Activated naive CD8-positive, alpha-beta T cell treated with anti-CD3 and anti-CD28 coated beads, Interleukin-2, amount 10 ng/mL, durations not matched to agents 7 days and 5 days (primary cell): ENCODE measurements at regions of chr2 and their contacts with region 1.

Region 1: GRCh38 chr2:96554293-96555145 is 18.0 kb downstream of the ARID5A start:
- DNase-seq: peak; percentile 80
- ATAC-seq: peak; percentile 54
- H3K4me3 Mint-ChIP-seq: no peak overlapping the region
- H3K27ac Mint-ChIP-seq: peak overlapping the region; percentile 34
- H3K4me1 Mint-ChIP-seq: peaks cover 8% of the 10 kb centered on the region
- H3K27me3 Mint-ChIP-seq: no peaks in the 10 kb centered on the region

Region 2: GRCh38 chr2:96452053-96452452 is 102.5 kb before region 1 on chr2:
- POLR2A ChIA-PET with region 1: no interaction called
- DNase-seq: no peak
- ATAC-seq: no peak
- H3K4me3 Mint-ChIP-seq: no peak overlapping the region
- H3K27ac Mint-ChIP-seq: no peak overlapping the region
- H3K4me1 Mint-ChIP-seq: no peaks in the 10 kb centered on the region
- H3K27me3 Mint-ChIP-seq: no peaks in the 10 kb centered on the region

Region 3: GRCh38 chr2:96527286-96528005 is 27.1 kb before region 1 on chr2:
- POLR2A ChIA-PET with region 1: interaction called, 15 read pairs
- DNase-seq: peak; percentile 68
- ATAC-seq: peak; percentile 19
- H3K4me3 Mint-ChIP-seq: peak overlapping the region; percentile 76
- H3K27ac Mint-ChIP-seq: peak overlapping the region; percentile 83
- H3K4me1 Mint-ChIP-seq: peaks cover 65% of the 10 kb centered on the region
- H3K27me3 Mint-ChIP-seq: peaks cover 2% of the 10 kb centered on the region